CD4-positive, alpha-beta memory T cell (primary cell): ENCODE measurements at regions of chr10 and their contacts with region 1.

Region 1: GRCh38 chr10:13160934-13161856 is at the start of gene MCM10:
- DNase-seq: peak; percentile 95 to 99 (median 97)
- H3K4me3 ChIP-seq: peak within 1 kb of the TSS; percentile 50 to 58
- H3K4me3 Mint-ChIP-seq: peak within 1 kb of the TSS; percentile 82 to 94 (median 88)
- H3K27ac ChIP-seq: peak within 1 kb of the TSS; percentile 33
- H3K27ac Mint-ChIP-seq: peak within 1 kb of the TSS; percentile 82 to 94 (median 88)
- H3K4me1 ChIP-seq: peaks cover 15% of the 10 kb centered on the region
- H3K4me1 Mint-ChIP-seq: peaks cover 15 to 36% (median 23%) of the 10 kb centered on the region in 4 donors
- H3K27me3 ChIP-seq: no peaks in the 10 kb centered on the region
- H3K27me3 Mint-ChIP-seq: no peaks in the 10 kb centered on the region
- total RNA-seq, gene MCM10: 0.17 TPM in 1 of 2 experiments, not detected in the other

Region 2: DNA sequence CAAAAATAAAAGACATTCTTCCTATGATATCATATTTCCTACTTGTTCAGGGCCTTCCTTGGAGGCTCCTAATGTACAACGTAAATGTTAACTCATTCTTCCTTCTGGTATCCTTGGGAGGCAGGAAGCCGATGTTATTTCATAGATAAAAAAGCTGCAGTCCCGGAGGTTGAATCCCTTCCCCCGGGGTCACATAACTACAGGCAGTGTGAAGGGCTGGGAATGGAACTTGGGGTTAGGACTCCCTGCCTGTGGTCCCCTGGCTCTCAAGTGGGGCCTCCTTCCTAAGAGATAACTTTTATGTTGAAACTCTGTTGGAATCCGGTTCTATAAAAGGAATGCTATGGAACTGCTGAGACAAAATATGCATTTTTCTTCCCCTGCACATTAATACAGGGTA is 144.8 kb before region 1 on chr10:
- CTCF ChIA-PET with region 1: no interaction called
- POLR2A ChIA-PET with region 1: no interaction called
- intact Hi-C with region 1: no loop called
- DNase-seq: no peak
- H3K4me3 ChIP-seq: no peak overlapping the region
- H3K4me3 Mint-ChIP-seq: no peak overlapping the region
- H3K27ac ChIP-seq: no peak overlapping the region
- H3K27ac Mint-ChIP-seq: no peak overlapping the region
- H3K4me1 ChIP-seq: no peaks in the 10 kb centered on the region
- H3K4me1 Mint-ChIP-seq: no peaks in the 10 kb centered on the region
- H3K27me3 ChIP-seq: no peaks in the 10 kb centered on the region
- H3K27me3 Mint-ChIP-seq: peaks cover 10 to 16% of the 10 kb centered on the region in 2 donors

Region 3: GRCh38 chr10:13234172-13234571 is 73.0 kb after region 1 on chr10 and contains the start of gene UCMA:
- CTCF ChIA-PET with region 1: no interaction called
- POLR2A ChIA-PET with region 1: no interaction called
- intact Hi-C with region 1: no loop called
- DNase-seq: no peak
- H3K4me3 ChIP-seq: no peak within 1 kb of the TSS
- H3K4me3 Mint-ChIP-seq: no peak within 1 kb of the TSS
- H3K27ac ChIP-seq: no peak within 1 kb of the TSS
- H3K27ac Mint-ChIP-seq: no peak within 1 kb of the TSS
- H3K4me1 ChIP-seq: no peaks in the 10 kb centered on the region
- H3K4me1 Mint-ChIP-seq: no peaks in the 10 kb centered on the region
- H3K27me3 ChIP-seq: no peaks in the 10 kb centered on the region
- H3K27me3 Mint-ChIP-seq: peaks cover 0 to 2% of the 10 kb centered on the region in 2 donors
- total RNA-seq, gene UCMA: not detected

Region 4: DNA sequence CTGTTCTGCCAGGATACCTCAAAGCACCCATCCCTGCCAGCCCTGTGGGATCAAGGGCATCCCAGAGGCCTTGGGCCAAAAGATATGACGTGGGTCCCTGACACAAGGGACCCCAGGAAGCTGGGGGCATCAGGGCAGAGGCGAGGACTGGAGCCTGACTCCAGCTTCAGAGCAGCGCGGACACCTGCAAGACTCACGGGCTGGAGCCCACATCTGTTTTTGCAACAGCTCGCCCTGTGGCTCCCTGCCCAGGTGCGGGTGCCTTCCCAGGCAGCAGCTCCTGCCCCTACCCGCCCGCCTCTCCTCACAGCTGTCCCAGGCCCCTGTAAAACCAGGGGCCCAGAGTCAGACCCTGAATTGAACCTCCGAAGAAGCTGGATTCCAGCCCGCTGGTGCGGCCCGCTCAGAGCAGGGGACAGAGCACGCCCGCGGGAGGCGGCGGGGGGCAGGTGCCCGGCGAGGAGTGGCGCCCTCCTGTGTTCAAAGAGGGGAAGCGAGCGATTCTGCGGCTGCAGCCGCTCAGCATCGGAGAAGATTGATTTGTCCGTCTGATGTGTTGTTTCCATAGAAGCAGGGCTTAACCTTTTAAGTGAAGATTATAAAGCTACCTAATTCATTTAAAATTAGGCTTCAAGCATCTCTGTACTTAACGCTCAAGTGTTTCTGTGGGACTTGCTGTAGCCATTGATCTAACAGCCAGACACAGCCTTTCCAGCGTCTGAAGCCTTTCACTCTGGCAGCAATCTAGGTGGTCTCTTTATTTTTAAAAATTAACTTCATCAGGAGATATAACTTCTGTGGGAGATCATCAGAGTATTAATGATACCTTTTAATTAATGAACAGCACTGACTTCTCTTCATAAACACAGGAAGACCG is 279.2 kb after region 1 on chr10:
- CTCF ChIA-PET with region 1: interaction called, 11 read pairs
- POLR2A ChIA-PET with region 1: no interaction called
- intact Hi-C with region 1: loop called (anchors 1 kb)
- DNase-seq: peak; percentile 50 to 65 (median 62)
- H3K4me3 ChIP-seq: peak overlapping the region in 1 of 2 donors; percentile 38
- H3K4me3 Mint-ChIP-seq: peak overlapping the region; percentile 27 to 90 (median 74)
- H3K27ac ChIP-seq: no peak overlapping the region
- H3K27ac Mint-ChIP-seq: peak overlapping the region in 2 of 7 donors; percentile 31 to 78
- H3K4me1 ChIP-seq: peaks cover 15% of the 10 kb centered on the region
- H3K4me1 Mint-ChIP-seq: peaks cover 8 to 13% (median 10%) of the 10 kb centered on the region in 4 donors
- H3K27me3 ChIP-seq: peaks cover 30% of the 10 kb centered on the region
- H3K27me3 Mint-ChIP-seq: peaks cover 40 to 42% of the 10 kb centered on the region in 2 donors